ENCODE measurements at regions of chr11 and their contacts with region 1.

Region 1: DNA sequence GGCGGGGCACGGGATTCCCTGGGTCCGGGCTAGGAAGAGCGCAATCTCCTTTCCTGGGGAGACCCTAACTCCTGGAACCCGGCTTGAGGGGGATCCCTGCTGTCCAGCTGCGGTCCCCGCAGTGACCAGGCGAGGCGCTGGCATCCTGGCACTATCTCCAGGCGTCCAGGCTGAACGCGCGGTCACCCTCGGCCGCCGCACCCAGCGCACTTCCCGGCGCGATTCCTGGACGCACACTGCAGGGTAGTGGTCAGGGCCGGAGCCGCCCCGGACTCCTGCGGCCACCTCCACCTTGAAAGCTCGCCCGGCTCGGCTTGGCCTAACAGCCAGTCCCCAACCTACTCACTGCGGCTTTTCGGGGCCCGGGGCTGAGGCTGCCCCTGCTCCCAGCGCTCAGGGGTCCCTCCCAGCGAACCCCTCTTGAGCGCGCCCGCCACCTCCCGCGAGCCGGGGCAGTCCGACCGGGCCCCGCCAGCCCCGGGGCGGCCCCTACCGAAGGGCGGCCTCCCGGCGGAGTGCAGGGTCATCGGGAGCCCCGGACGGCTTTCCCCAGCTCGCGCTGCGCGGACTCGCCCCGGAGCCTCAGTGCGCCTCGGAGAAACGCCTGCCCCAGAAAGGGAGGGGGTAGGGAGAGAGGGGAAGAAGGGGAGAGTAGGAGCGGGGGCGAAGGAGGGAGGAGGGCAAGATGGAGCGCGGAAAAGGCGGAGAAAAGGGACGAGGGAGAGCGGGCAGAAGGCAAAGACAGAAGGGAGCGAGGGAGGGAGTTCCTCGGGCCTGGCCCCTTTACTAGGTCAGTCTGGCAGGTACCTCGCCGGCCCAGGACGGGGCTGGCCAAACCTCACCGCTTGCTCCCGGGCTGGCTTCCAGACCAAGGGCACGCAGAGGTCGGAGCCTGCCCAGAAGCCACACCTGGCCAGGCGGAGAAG is 1.0 kb downstream of the POU2AF3 start:
- DNase-seq: peak; percentile 28 to 67
- ATAC-seq: peak; percentile 74 to 94 (median 86)
- H3K4me3 ChIP-seq: peak overlapping the region; percentile 37 to 68 (median 62)
- H3K27ac ChIP-seq: peak overlapping the region in 8 of 10 donors; percentile 21 to 82 (median 44)
- H3K4me1 ChIP-seq: peaks cover 4 to 17% (median 13%) of the 10 kb centered on the region in 9 donors
- H3K27me3 ChIP-seq: peaks cover 7 to 41% (median 28%) of the 10 kb centered on the region in 7 donors
- CTCF ChIP-seq: peak; percentile 21 to 62 (median 54)

Region 2: GRCh38 chr11:110921742-110922521 is 377.4 kb before region 1 on chr11:
- intact Hi-C with region 1: no loop called
- DNase-seq: no peak
- ATAC-seq: peak in 2 of 8 donors; percentile 42 to 61
- H3K4me3 ChIP-seq: no peak overlapping the region
- H3K27ac ChIP-seq: no peak overlapping the region
- H3K4me1 ChIP-seq: peaks cover 0 to 9% (median 0%) of the 10 kb centered on the region in 9 donors
- H3K27me3 ChIP-seq: no peaks in the 10 kb centered on the region
- CTCF ChIP-seq: no peak

Region 3: GRCh38 chr11:111123463-111124398 is 175.6 kb before region 1 on chr11:
- intact Hi-C with region 1: no loop called
- DNase-seq: peak in 1 of 2 donors; percentile 7
- ATAC-seq: peak in 1 of 8 donors; percentile 33
- H3K4me3 ChIP-seq: no peak overlapping the region
- H3K27ac ChIP-seq: no peak overlapping the region
- H3K4me1 ChIP-seq: no peaks in the 10 kb centered on the region
- H3K27me3 ChIP-seq: no peaks in the 10 kb centered on the region
- CTCF ChIP-seq: no peak

Region 4: DNA sequence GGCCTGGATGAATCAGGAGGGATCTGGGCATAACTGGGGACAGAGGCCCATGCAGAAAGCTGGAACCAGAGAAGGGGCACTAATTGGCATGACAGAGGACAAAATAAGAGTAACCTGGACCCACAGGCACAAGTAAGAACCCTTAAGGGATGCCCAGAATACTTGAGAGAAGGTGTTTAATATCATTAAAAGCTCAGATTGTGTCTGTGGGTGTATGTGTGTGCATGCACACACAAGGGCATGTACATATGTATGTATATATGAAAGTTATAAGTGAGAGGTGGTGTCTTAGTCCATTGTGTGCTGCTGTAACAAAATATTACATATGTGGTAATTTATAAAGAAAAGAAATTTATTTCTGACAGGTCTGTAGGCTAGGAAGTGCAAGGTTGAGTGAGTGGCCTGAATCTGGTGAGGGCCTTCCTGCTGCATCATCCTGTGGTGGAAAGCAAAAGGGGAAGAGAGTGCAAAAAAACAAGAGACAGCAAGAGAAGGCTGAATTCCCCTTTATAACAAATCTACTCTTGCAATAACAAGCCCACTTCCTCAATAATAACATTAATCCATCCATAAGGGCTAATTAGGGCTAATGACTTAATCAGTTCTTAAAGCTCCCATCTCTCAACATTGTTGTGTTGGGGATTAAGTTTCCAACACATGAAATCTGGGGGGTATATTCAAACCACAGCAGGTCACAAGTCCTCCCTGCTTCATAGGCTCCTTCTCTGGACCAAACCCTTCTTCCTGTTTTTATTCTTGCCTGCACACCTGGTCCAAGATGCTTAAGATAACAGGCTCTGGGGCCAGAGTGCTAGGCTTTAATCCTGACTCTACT is 122.1 kb before region 1 on chr11:
- intact Hi-C with region 1: no loop called
- DNase-seq: no peak
- ATAC-seq: no peak
- H3K4me3 ChIP-seq: no peak overlapping the region
- H3K27ac ChIP-seq: no peak overlapping the region
- H3K4me1 ChIP-seq: peaks cover 0 to 11% (median 0%) of the 10 kb centered on the region in 9 donors
- H3K27me3 ChIP-seq: no peaks in the 10 kb centered on the region
- CTCF ChIP-seq: no peak

Region 5: GRCh38 chr11:111422494-111423249 is 123.3 kb after region 1 on chr11:
- intact Hi-C with region 1: loop called in 5 of 10 experiments (anchors 5 kb)
- DNase-seq: peak in 1 of 2 donors; percentile 45
- ATAC-seq: peak in 7 of 8 donors; percentile 61 to 79 (median 71)
- H3K4me3 ChIP-seq: no peak overlapping the region
- H3K27ac ChIP-seq: no peak overlapping the region
- H3K4me1 ChIP-seq: peaks cover 0 to 21% (median 8%) of the 10 kb centered on the region in 9 donors
- H3K27me3 ChIP-seq: peaks cover 0 to 18% (median 0%) of the 10 kb centered on the region in 7 donors
- CTCF ChIP-seq: peak; percentile 30 to 75 (median 70)

Region 6: DNA sequence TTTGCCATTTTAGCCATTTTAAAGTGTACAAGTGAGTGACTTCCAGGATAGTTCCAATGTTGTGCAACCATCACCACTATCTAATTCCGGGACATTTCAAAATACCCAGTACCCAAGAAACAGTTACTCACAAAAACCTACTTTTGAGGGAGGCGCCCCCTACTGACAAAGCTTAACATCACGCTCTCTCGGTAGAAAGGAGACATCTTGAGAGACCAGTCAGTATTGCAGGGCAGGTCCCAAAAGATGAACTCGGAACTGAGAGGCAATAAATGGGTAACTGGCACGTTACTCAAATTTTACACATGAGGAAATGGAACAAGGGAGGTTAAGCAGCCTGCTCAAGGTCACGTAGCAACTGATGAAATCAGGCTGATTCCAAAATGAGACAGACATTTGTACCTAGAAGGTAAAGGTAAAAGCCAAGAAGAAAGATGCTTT is 129.7 kb after region 1 on chr11:
- intact Hi-C with region 1: loop called in 4 of 10 experiments (anchors 5 kb)
- DNase-seq: no peak
- ATAC-seq: peak in 1 of 8 donors; percentile 68
- H3K4me3 ChIP-seq: no peak overlapping the region
- H3K27ac ChIP-seq: no peak overlapping the region
- H3K4me1 ChIP-seq: no peaks in the 10 kb centered on the region
- H3K27me3 ChIP-seq: peaks cover 0 to 33% (median 5%) of the 10 kb centered on the region in 7 donors
- CTCF ChIP-seq: peak in 7 of 9 donors; percentile 44 to 69 (median 54)

Region 7: DNA sequence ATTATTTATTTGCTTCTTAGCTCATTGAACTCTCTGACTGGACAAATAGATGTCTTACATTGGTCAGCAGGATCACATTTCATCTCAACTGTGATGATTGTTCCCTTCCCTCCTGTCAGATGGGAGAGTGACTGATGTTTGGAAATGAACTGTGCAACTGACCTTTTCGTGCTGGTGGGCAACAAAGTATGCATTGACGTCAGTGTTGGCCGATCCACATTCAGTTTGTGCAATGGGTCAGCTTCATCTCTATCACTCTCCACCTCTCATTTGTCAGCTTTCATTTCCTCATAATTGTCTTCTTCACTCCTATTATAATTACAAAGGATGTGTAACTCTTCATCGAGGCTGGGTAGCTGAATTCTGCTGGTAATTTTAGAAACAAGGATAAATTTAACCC is 395.5 kb after region 1 on chr11:
- intact Hi-C with region 1: no loop called
- DNase-seq: no peak
- ATAC-seq: peak in 5 of 8 donors; percentile 18 to 92 (median 52)
- H3K4me3 ChIP-seq: no peak overlapping the region
- H3K27ac ChIP-seq: peak overlapping the region in 5 of 10 donors; percentile 33 to 61 (median 43)
- H3K4me1 ChIP-seq: peaks cover 2 to 52% (median 30%) of the 10 kb centered on the region in 9 donors
- H3K27me3 ChIP-seq: no peaks in the 10 kb centered on the region
- CTCF ChIP-seq: no peak

Measured in heart right ventricle (tissue), 16 donors.